Right cardiac atrium (tissue), 5 donors: ENCODE measurements at regions of chr15 and their contacts with region 1.

Region 1: GRCh38 chr15:56918046-56918938 is at the start of gene TCF12:
- DNase-seq: peak; percentile 97 to 98 (median 98)
- ATAC-seq: peak; percentile 98
- H3K4me3 ChIP-seq: peak within 1 kb of the TSS; percentile 92
- H3K27ac ChIP-seq: peak within 1 kb of the TSS; percentile 89
- H3K4me1 ChIP-seq: peaks cover 5% of the 10 kb centered on the region
- H3K27me3 ChIP-seq: no peaks in the 10 kb centered on the region
- total RNA-seq, gene TCF12: 50.4 to 58.8 (median 53.2) TPM

Region 2: GRCh38 chr15:56886932-56887781 is 31.1 kb before region 1 on chr15:
- intact Hi-C with region 1: loop called in 3 of 4 experiments (anchors 1 to 2 kb)
- DNase-seq: peak; percentile 96 to 98 (median 98)
- ATAC-seq: peak; percentile 98 to 99
- H3K4me3 ChIP-seq: peak overlapping the region; percentile 70
- H3K27ac ChIP-seq: peak overlapping the region; percentile 99
- H3K4me1 ChIP-seq: peaks cover 3% of the 10 kb centered on the region
- H3K27me3 ChIP-seq: no peaks in the 10 kb centered on the region

Region 3: GRCh38 chr15:57138349-57138788 is 220.1 kb after region 1 on chr15:
- intact Hi-C with region 1: loop called in 3 of 4 experiments (anchors 10 kb)
- DNase-seq: no peak
- ATAC-seq: peak; percentile 76 to 86
- H3K4me3 ChIP-seq: peak overlapping the region; percentile 15
- H3K27ac ChIP-seq: no peak overlapping the region
- H3K4me1 ChIP-seq: peaks cover 2% of the 10 kb centered on the region
- H3K27me3 ChIP-seq: no peaks in the 10 kb centered on the region